Ascending aorta (tissue), 2 donors: ENCODE measurements at regions of chr18 and their contacts with region 1.

Region 1: DNA sequence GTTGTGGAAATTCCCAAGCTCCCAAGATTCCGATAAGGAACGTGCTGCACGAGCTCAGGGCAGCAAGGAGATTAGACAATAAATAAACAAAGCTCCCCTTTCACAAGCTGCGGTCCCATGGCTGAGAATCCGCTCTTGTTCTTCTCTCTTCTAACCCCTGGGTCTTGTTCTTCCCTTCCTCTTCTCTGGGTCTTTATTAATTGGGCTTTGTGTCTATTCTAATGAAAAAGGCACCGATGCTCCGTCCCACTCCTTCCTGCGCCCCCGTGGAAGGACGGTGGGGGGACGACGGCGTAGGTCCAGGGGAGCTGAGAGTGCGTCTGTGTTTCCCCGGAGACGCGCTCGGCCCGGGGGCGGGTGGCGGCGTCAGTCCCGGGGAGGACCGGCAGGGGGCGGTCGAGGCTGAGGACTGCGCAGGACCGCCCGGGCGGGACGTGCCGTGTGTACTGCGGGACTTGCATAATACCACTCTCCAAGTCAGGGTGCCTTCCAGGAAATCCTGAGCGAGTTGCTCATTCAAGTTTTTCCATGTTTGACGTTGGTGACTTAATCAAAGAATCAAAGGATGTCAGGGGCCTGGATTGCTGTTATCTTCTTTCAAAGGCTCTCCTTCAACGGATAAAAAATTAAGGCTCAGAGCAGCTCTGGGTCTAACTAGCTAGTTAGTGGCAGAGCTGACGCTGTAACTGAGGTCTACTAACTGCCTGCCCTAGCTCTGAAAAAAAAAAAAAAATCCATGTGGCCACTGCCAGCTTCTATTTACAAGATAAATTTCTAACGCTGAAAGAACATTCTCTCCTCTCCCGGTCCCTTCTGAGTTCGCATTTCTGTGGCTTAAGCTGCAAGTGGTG is 321.4 kb downstream of the TGIF1 start:
- DNase-seq: peak; percentile 52 to 95
- H3K4me3 ChIP-seq: peak overlapping the region; percentile 57 to 58
- H3K27ac ChIP-seq: peak overlapping the region; percentile 45 to 58
- H3K4me1 ChIP-seq: peaks cover 0 to 9% of the 10 kb centered on the region in 2 donors
- H3K27me3 ChIP-seq: no peaks in the 10 kb centered on the region
- CTCF ChIP-seq: peak; percentile 94 to 95 (median 94)

Region 2: GRCh38 chr18:3703732-3704176 is 67.6 kb before region 1 on chr18:
- intact Hi-C with region 1: loop called (anchors 5 kb)
- DNase-seq: peak in 1 of 2 donors; percentile 79
- H3K4me3 ChIP-seq: peak overlapping the region in 1 of 2 donors; percentile 22
- H3K27ac ChIP-seq: no peak overlapping the region
- H3K4me1 ChIP-seq: peaks cover 0 to 6% of the 10 kb centered on the region in 2 donors
- H3K27me3 ChIP-seq: no peaks in the 10 kb centered on the region
- CTCF ChIP-seq: peak; percentile 21 to 70 (median 64)

Region 3: GRCh38 chr18:3914833-3915610 is 143.7 kb after region 1 on chr18:
- intact Hi-C with region 1: loop called (anchors 5 kb)
- DNase-seq: no peak
- H3K4me3 ChIP-seq: no peak overlapping the region
- H3K27ac ChIP-seq: no peak overlapping the region
- H3K4me1 ChIP-seq: peaks cover 0 to 17% of the 10 kb centered on the region in 2 donors
- H3K27me3 ChIP-seq: no peaks in the 10 kb centered on the region
- CTCF ChIP-seq: no peak

Region 4: GRCh38 chr18:3995476-3996102 is 224.2 kb after region 1 on chr18:
- intact Hi-C with region 1: loop called (anchors 1 kb)
- DNase-seq: peak in 1 of 2 donors; percentile 71
- H3K4me3 ChIP-seq: peak overlapping the region; percentile 23 to 47
- H3K27ac ChIP-seq: no peak overlapping the region
- H3K4me1 ChIP-seq: no peaks in the 10 kb centered on the region
- H3K27me3 ChIP-seq: no peaks in the 10 kb centered on the region
- CTCF ChIP-seq: peak; percentile 43 to 85 (median 82)

Region 5: DNA sequence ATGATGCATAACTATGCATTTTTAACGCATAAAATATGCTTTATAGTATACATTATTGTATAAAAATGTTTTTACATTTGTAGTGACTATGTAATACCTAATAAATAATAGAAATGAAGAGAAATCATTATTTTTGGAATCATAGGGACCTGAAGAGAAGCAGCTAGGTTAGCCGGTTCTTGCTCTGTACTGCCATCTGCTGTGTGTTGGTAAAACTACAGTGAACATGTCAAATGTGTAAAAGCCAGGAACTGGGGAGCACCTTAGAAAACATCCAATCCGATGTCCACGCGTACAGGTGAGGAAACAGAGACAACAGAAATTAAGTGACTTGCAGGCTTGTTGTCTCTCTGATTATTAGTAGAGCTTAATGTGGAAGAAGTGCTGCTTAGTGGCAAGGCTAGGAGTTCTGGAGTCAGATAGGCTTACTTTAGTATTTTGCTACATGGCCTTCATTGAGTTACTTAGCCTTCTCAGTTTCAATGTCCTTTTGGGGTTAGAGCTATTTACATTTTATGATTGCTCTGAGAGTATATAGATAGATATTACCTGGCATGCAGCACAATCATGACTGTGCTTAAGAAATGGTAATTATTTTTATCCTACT is 297.3 kb after region 1 on chr18:
- intact Hi-C with region 1: loop called (anchors 2 kb)
- DNase-seq: no peak
- H3K4me3 ChIP-seq: no peak overlapping the region
- H3K27ac ChIP-seq: no peak overlapping the region
- H3K4me1 ChIP-seq: no peaks in the 10 kb centered on the region
- H3K27me3 ChIP-seq: no peaks in the 10 kb centered on the region
- CTCF ChIP-seq: peak in 2 of 3 experiments; percentile 74 to 79